Cardiac septum (tissue), 1 donor: ENCODE measurements at regions of chr12 and their contacts with region 1.

Region 1: DNA sequence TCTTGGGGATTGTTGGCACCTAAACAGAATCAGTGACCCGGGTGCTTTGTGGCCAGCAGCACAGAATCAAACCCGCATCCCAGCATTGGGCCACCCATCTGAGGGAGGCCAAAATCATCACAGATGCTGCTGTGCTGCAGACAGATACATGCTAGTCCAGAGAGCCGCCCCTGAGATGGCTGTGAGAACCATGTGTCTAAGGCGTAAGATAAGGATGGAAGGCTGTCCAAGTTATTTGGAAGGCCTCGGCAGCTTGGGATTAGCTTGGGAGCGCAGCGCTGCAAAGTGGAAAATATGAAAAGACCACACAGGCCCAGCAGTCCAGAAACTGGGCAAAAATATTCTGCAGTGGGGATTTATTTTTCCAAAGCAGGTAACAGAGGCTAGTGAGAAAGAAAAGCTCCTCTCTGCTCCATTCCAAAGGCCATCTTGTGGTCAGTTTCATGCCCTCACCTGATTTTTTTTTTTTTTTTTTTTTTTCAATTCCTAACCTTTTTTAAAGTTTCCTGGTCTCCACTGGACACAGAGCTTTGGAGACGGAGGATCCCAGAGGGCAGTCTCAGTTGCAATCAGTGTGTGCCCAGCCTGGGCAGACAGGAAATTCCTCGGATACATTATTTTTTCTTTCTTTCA is 178.9 kb upstream of the BCL2L14 start:
- DNase-seq: no peak

Region 2: DNA sequence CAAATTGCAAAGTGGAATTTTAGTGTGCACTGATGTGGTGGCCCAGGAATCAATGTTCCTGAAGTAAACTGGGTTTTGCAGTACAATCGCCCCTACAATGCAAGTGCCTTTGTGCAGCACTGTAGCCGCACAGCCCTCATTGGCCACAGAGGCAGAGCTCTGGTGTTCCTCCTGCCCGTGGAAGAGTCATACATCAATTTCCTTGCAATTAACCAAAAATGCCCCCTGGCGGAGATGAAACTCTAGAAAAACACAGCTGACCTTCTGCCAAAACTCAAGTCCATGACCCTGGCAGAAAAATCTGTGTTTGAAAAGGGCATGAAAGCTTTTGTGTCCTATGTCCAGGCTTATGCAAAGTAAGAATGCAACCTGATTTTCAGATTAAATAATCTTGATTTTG is 378.6 kb before region 1 on chr12:
- intact Hi-C with region 1: no loop called
- DNase-seq: no peak

Region 3: GRCh38 chr12:11805043-11805442 is 86.8 kb before region 1 on chr12:
- intact Hi-C with region 1: no loop called
- DNase-seq: no peak

Region 4: DNA sequence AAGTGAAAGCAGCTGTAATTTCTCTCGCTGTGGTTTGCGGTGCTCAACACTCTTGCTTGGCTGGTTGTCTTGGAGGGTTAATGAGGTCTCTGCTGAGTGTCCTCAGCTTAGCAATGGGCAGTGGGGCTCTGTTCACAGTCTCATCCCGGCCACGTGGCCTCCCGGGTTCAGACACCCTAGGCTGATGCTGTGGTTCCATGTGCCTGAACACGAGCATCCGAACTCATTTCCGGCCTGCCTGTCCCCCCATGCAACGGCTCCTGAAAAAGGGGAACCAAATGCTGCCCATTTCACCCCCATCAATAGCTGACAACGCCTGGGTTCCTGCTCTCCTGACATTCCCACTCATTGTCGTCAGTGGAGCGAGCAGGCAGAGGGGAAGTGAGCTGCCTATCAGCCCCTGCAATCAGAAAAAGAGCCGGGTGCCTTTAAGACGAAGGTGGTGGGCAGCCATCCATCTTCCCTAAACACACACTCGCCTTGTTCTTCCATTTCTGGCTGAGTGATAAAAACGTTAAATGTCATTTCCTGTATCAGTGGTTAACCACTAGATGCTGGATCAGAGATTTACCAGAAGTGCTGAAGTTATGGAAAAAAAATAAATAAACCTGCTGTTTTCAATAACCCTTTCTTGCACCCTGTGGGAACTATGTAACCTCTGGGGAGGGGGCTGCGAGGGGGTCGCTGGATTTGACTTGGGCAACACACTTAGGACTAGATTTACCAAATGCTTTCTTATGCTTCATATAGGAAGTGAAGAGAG is 118.6 kb after region 1 on chr12:
- intact Hi-C with region 1: loop called (anchors 10 kb)
- DNase-seq: peak; percentile 83